Mucosa of descending colon (tissue), 3 donors: ENCODE measurements at regions of chr4 and their contacts with region 1.

Region 1: DNA sequence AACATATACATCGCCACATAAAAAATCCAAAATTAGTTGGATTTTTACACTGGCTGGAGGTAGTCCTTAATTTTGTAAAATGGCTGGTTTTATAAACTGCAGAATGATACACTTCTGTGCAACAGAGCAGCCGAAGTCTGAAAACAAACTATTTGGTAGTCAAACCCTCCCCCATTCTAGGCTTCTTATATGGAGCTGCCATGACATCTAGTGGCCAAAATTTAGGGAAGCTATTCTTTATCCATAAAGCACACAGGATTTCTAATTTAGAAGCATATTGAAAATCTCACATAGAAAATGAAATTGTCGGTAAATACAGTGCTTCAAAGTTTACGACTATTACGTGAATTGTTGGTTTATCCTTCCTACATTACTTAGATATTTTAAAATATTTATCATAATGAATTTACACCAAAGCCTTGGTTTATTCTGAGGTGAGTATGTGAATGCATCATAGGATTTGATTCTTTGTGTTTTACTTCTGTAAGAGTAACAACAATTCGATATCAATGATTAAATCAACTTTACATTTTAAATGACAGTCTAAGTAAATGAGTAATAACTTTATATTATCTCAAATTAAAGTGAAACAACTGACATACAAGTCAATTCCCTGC is 113.4 kb upstream of the FAM241A start:
- DNase-seq: peak in 1 of 3 donors; percentile 73
- ATAC-seq: peak; percentile 71
- H3K4me3 ChIP-seq: no peak overlapping the region
- H3K4me1 ChIP-seq: no peaks in the 10 kb centered on the region
- CTCF ChIP-seq: peak; percentile 10

Region 2: DNA sequence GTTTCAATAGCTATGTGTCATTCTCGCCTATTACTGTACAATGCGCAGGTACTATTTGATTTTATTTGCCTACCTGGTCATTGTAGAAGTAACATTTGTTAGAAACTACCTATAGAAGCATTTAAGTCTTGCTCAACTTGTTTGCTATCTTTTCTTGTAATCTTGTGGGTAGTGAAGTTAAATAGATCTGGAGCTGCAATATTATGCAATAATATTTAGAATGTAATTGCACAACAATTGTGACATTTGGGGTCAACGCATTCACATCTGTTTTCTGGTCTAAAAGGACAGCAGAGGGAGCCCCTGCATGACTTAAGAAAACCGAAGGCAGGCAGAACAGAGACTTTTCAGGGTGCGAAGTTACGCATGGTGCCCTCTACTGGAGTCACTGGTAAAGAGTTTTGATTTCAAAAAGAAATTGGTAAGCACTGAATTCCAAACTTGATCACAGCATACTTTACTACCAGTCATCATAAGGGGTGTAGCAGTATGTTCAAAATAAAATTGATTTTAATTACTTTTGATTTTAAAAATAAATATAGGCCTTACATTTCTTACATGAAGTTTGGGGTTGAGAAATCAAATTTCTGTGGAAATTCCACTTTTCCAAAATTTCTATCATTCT is 389.8 kb before region 1 on chr4:
- intact Hi-C with region 1: loop called in 1 of 2 experiments (anchors 10 kb)
- DNase-seq: peak in 2 of 3 donors; percentile 30 to 80
- ATAC-seq: peak; percentile 81
- H3K4me3 ChIP-seq: no peak overlapping the region
- H3K4me1 ChIP-seq: no peaks in the 10 kb centered on the region
- CTCF ChIP-seq: peak; percentile 37

Region 3: DNA sequence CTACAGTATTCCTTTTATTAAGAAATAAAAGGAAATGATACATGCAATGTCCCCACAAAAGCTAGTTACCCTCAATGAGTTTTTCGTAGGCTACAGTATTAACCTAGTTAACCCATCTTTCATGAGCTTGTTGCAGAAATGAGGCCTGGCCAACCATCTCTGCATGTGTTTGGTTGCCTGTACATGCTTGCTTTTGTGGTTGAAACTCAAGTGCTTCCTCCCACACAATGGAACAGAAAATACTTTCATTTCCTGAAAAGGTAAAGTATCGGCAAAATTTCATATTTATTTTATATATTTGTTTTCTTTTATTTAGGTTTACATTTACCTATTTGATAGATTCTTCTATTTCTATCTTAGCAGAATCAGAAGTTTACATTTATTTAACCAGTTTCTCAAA is 101.2 kb before region 1 on chr4:
- intact Hi-C with region 1: no loop called
- DNase-seq: no peak
- ATAC-seq: no peak
- H3K4me3 ChIP-seq: no peak overlapping the region
- H3K4me1 ChIP-seq: no peaks in the 10 kb centered on the region
- CTCF ChIP-seq: no peak

Region 4: DNA sequence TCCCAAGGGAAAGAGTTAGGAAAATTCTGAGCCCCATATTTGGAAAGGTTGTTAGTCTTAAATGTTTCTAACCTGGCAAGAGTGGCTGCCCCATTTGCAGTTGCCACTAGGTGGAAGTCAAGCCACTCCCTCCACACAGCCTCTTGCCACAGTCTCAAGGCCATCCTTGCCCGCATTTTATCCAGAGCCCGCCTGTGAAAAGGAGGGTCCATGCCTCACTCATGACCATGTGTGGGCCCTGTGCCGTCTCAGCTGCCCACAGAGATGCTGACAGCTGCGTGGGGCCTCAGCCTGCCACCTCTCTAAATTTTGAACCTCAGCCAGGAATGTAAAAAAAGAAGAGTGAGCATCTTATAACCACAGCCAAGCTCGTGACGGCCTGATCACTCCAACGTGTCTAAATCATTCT is 88.0 kb before region 1 on chr4:
- intact Hi-C with region 1: loop called in 1 of 2 experiments (anchors 5 kb)
- DNase-seq: peak in 2 of 3 donors; percentile 64 to 72
- ATAC-seq: peak; percentile 91
- H3K4me3 ChIP-seq: no peak overlapping the region
- H3K4me1 ChIP-seq: no peaks in the 10 kb centered on the region
- CTCF ChIP-seq: peak; percentile 48

Region 5: DNA sequence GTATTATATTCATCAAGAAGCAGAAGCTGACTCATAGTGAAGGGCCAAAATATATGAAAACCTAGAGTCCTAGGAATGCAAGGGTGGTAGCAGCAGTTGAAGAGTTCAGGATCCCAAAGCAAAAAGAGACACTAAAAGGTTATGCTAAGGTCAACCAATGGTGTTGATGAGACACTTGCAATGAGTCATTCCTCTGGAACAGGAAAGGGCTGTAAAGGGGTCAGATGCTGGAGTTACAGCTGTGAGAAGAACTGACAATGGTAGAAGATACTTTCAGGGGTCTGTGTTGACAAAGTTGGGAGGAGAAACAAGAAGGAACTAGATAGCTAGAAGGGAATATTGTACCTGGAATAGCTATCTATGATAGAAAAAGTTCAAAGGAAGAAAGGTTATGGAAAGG is 557.4 kb after region 1 on chr4:
- intact Hi-C with region 1: no loop called
- DNase-seq: no peak
- ATAC-seq: no peak
- H3K4me3 ChIP-seq: no peak overlapping the region
- H3K4me1 ChIP-seq: no peaks in the 10 kb centered on the region
- CTCF ChIP-seq: no peak